ENCODE measurements at regions of chrX and their contacts with region 1.

Region 1: DNA sequence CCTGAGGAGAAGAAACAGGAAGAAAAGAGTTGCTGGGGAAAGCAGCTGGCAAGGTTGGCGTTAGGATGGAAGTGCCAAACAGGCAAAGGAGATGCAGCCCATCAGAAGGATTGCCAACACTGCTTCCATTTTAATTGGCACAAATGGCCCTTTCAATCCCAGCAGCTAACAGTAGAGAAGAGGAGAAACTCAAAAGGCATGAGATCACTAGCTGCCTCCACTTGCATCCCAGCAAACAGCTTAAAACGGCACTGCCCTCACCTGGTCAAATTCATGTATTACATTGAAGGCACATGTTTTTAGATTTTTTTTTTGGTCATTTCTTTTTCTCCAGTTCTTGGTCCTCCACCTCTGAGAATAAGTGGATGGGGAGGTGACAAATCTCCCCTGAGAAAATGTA is 14.9 kb upstream of the LOC101059915 start:
- DNase-seq: peak; percentile 78
- H3K4me3 Mint-ChIP-seq: no peak overlapping the region
- H3K27ac Mint-ChIP-seq: no peak overlapping the region
- H3K4me1 Mint-ChIP-seq: peaks cover 10% of the 10 kb centered on the region
- H3K27me3 Mint-ChIP-seq: no peaks in the 10 kb centered on the region

Region 2: GRCh38 chrX:70970482-70970995 is 681.9 kb before region 1 on chrX:
- CTCF ChIA-PET with region 1: no interaction called
- intact Hi-C with region 1: loop called (anchors 2 kb)
- DNase-seq: no peak
- H3K4me3 Mint-ChIP-seq: no peak overlapping the region
- H3K27ac Mint-ChIP-seq: no peak overlapping the region
- H3K4me1 Mint-ChIP-seq: peaks cover 4% of the 10 kb centered on the region
- H3K27me3 Mint-ChIP-seq: no peaks in the 10 kb centered on the region

Region 3: DNA sequence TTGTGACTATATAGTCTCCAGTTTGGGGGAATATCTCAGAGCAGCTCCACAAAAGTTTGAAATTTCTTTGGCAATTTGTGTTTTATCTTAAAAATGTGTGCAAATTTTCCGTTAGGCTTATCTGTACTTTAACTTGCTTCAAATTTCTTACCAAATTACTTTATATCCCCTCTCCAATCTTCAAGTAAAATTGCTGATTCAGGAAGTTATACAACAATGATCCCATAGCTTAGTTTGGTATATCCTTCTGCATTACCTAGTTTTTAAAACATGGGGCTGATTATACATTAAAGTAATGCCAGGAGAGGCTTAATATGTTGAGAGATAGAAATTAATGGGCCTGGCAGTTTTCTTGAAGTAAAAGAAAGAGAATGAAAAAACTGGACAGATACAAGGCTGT is 219.7 kb before region 1 on chrX:
- CTCF ChIA-PET with region 1: no interaction called
- intact Hi-C with region 1: loop called (anchors 5 kb)
- DNase-seq: no peak
- H3K4me3 Mint-ChIP-seq: no peak overlapping the region
- H3K27ac Mint-ChIP-seq: no peak overlapping the region
- H3K4me1 Mint-ChIP-seq: peaks cover 2% of the 10 kb centered on the region
- H3K27me3 Mint-ChIP-seq: no peaks in the 10 kb centered on the region

Region 4: GRCh38 chrX:71514367-71515038 is 137.9 kb before region 1 on chrX:
- CTCF ChIA-PET with region 1: no interaction called
- intact Hi-C with region 1: loop called (anchors 1 kb)
- DNase-seq: peak; percentile 55
- H3K4me3 Mint-ChIP-seq: no peak overlapping the region
- H3K27ac Mint-ChIP-seq: peak overlapping the region; percentile 15
- H3K4me1 Mint-ChIP-seq: peaks cover 17% of the 10 kb centered on the region
- H3K27me3 Mint-ChIP-seq: no peaks in the 10 kb centered on the region

Region 5: GRCh38 chrX:71573591-71573990 is 78.8 kb before region 1 on chrX:
- CTCF ChIA-PET with region 1: interaction called, 4 read pairs
- intact Hi-C with region 1: loop called (anchors 5 kb)
- DNase-seq: no peak
- H3K4me3 Mint-ChIP-seq: no peak overlapping the region
- H3K27ac Mint-ChIP-seq: peak overlapping the region; percentile 31
- H3K4me1 Mint-ChIP-seq: no peaks in the 10 kb centered on the region
- H3K27me3 Mint-ChIP-seq: no peaks in the 10 kb centered on the region

Region 6: DNA sequence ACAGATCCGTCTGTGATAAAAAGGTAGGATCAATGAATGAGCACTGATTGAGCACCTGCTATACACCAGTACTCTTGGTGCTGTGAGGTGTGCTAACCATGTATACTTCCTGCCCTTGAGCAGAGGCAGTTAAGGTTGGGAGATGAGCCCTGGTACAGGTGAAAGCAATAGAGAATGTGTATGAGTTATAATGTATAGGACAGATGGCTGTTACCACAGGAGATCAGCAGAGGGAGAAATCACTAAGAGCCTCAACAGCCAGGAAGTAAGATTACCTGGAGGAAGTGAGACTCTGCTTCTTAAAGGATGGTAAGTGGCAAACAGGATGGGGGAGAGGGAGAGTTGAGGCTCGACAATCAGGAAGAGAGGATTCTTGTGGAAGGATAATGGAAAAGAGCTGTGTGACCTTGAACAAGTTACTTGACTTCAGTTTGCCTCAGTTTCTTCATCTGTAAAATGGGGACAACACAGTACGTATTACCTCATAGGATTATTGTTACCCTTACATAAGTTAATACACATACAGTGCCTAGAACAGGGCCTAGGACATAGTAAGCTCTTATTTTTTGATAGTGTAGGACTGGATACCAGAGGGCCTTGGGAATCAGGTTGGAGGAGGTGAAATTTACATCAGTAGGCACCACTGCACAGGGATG is 43.2 kb before region 1 on chrX:
- CTCF ChIA-PET with region 1: interaction called, 4 read pairs
- intact Hi-C with region 1: loop called (anchors 1 kb)
- DNase-seq: no peak
- H3K4me3 Mint-ChIP-seq: no peak overlapping the region
- H3K27ac Mint-ChIP-seq: no peak overlapping the region
- H3K4me1 Mint-ChIP-seq: peaks cover 41% of the 10 kb centered on the region
- H3K27me3 Mint-ChIP-seq: no peaks in the 10 kb centered on the region

Measured in activated naive CD4-positive, alpha-beta T cell treated with anti-CD3 and anti-CD28 coated beads for 36 hours (primary cell).